ENCODE measurements at regions of chr2 and their contacts with region 1.

Region 1: GRCh38 chr2:222753251-222753824 is 81.9 kb downstream of the MOGAT1 start:
- DNase-seq: no peak
- H3K4me3 ChIP-seq: no peak overlapping the region
- H3K27ac ChIP-seq: no peak overlapping the region
- H3K4me1 ChIP-seq: peaks cover 6% of the 10 kb centered on the region
- CTCF ChIP-seq: no peak

Region 2: GRCh38 chr2:222767151-222767876 is 14.0 kb after region 1 on chr2:
- CTCF ChIA-PET with region 1: interaction called, 4 read pairs
- POLR2A ChIA-PET with region 1: interaction called, 11 read pairs
- intact Hi-C with region 1: no loop called
- DNase-seq: no peak
- H3K4me3 ChIP-seq: no peak overlapping the region
- H3K27ac ChIP-seq: no peak overlapping the region
- H3K4me1 ChIP-seq: peaks cover 8% of the 10 kb centered on the region
- CTCF ChIP-seq: no peak

Measured in OCI-LY7 (cell line).